H1 (cell line): ENCODE measurements at regions of chr10 and their contacts with region 1.

Region 1: DNA sequence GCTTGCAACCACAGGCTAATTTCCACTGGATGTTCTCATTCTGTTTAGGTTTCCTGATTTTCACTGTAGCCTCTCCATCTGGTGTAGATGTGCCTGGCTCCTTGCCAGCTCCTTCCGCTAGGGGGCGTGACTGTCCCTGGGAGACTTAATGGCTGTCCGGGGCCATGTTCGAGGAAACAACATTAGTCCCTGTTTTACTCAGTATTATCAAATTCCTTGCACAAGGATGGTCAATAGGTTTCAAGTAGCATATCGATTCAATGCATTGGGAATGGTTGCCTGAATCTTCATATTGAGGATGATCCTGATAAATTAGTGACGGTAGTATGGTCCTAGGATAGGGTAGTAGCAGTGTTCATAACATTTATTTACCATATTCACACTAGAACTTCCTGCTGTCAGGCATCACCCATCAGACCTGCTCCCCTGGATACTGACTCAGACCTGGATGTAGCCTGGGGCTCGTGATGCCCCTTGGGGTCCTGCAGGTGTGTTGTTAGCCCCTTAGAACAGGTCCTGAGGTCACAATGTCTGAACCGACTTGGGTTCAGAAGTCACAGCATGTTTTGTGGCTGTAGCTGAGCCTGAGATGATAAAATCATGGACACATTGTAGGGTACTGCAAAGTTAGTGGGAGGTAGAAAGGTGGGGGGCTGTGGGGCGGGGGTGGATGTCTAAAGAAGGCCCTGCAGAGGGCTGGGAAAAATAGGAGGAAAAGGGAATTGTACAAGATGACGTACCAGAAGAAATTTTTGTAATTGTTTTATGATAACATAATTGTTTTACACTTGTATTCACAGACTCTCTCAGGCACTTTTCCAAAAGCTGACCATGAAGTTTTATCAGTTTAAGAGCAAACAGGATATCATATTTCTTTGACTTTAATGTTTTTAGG is 8.9 kb upstream of the EXOC6 start:
- DNase-seq: peak in 1 of 2 experiments; percentile 95
- H3K4me3 ChIP-seq: no peak overlapping the region
- H3K27ac ChIP-seq: no peak overlapping the region
- H3K4me1 ChIP-seq: 0 out of 7 replicates have a peak, but pooled peaks cover 0 to 3% (median 0%) of the 10 kb centered on the region in 4 experiments
- H3K27me3 ChIP-seq: no peaks in the 10 kb centered on the region
- CTCF ChIP-seq: peak; percentile 75 to 95 (median 93)
- EP300 ChIP-seq: no peak
- POLR2A ChIP-seq: no peak
- RAD21 ChIP-seq: peak; percentile 48 to 69

Region 2: GRCh38 chr10:92702301-92702916 is 137.0 kb before region 1 on chr10:
- CTCF ChIA-PET with region 1: no interaction called
- POLR2A ChIA-PET with region 1: no interaction called
- DNase-seq: no peak
- H3K4me3 ChIP-seq: no peak overlapping the region
- H3K27ac ChIP-seq: no peak overlapping the region
- H3K4me1 ChIP-seq: no peaks in the 10 kb centered on the region; a peak in 1 of 7 replicates
- H3K27me3 ChIP-seq: peaks cover 3 to 32% (median 24%) of the 10 kb centered on the region in 4 experiments
- CTCF ChIP-seq: no peak
- EP300 ChIP-seq: no peak
- POLR2A ChIP-seq: no peak
- RAD21 ChIP-seq: no peak

Region 3: GRCh38 chr10:92816091-92816531 is 23.3 kb before region 1 on chr10:
- CTCF ChIA-PET with region 1: interaction called, 22 read pairs
- POLR2A ChIA-PET with region 1: no interaction called
- DNase-seq: no peak
- H3K4me3 ChIP-seq: no peak overlapping the region
- H3K27ac ChIP-seq: no peak overlapping the region
- H3K4me1 ChIP-seq: no peaks in the 10 kb centered on the region
- H3K27me3 ChIP-seq: no peaks in the 10 kb centered on the region
- CTCF ChIP-seq: no peak
- EP300 ChIP-seq: no peak
- POLR2A ChIP-seq: no peak
- RAD21 ChIP-seq: no peak

Region 4: DNA sequence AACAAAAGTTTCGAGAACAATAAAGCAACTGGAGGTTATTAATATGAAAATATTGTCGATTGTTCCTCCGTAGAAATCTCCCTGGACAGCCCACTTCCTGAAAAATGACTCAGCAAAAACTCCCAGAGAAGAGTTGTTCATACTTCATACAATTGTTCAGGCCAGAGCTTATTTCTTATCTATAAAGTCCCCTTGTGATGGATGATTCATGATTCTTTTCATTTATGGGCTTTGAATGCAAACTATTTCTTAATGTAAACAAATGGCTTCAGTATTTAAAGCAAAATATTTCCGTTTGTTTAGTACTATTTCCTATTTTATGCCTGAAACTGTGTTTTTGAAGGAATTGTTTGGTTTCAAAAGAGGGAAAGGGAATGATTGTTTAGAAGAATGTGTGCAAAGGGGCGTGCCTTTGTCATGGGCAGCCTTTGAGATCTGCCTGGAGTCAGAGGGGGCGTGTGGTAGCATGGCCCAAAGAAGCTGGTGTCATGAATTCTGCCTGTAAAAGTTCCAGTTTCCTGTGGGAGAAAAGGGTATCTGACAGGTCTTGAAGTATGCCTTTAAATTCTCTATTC is 17.3 kb before region 1 on chr10:
- CTCF ChIA-PET with region 1: interaction called, 25 read pairs
- POLR2A ChIA-PET with region 1: no interaction called
- DNase-seq: peak in 1 of 2 experiments; percentile 7
- H3K4me3 ChIP-seq: no peak overlapping the region
- H3K27ac ChIP-seq: no peak overlapping the region
- H3K4me1 ChIP-seq: no peaks in the 10 kb centered on the region
- H3K27me3 ChIP-seq: no peaks in the 10 kb centered on the region
- CTCF ChIP-seq: no peak
- EP300 ChIP-seq: no peak
- POLR2A ChIP-seq: no peak
- RAD21 ChIP-seq: no peak

Region 5: GRCh38 chr10:92829042-92829785 is 10.2 kb before region 1 on chr10:
- CTCF ChIA-PET with region 1: interaction called, 86 read pairs
- POLR2A ChIA-PET with region 1: interaction called, 3 read pairs
- DNase-seq: peak in 1 of 2 experiments; percentile 42
- H3K4me3 ChIP-seq: no peak overlapping the region
- H3K27ac ChIP-seq: no peak overlapping the region
- H3K4me1 ChIP-seq: no peaks in the 10 kb centered on the region
- H3K27me3 ChIP-seq: no peaks in the 10 kb centered on the region
- CTCF ChIP-seq: no peak
- EP300 ChIP-seq: no peak
- POLR2A ChIP-seq: no peak
- RAD21 ChIP-seq: no peak

Region 6: DNA sequence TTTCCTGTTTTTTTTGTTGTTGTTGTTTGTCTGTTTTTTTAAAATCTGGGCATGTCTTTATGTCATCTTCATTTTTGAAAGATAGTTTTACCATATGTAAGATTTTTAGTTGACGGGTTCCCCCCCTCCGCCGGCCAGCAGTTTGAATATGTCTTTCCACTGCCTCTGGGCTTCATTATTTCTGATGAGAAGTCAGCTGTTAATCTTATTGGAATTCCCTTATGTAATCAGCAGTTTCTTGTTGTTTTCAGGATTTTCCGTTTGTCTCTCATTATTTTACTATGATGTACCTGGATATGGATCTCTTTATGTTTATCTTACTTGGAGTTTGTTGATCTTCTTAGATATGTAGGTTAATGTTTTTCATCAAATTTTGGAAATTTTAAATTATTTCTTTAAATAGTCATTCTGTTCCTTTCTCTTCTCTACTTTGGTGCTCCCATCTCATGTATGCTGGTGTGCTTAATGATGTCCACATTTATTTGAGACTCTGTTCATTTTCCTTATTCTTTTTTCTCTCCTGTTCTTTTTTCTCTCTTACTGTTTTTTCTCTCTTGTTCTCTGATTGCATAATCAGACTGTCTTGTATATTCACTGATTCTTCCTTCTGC is 18.6 kb after region 1 on chr10:
- CTCF ChIA-PET with region 1: interaction called, 20 read pairs
- POLR2A ChIA-PET with region 1: no interaction called
- DNase-seq: no peak
- H3K4me3 ChIP-seq: no peak overlapping the region
- H3K27ac ChIP-seq: no peak overlapping the region
- H3K4me1 ChIP-seq: no peaks in the 10 kb centered on the region
- H3K27me3 ChIP-seq: no peaks in the 10 kb centered on the region
- CTCF ChIP-seq: no peak
- EP300 ChIP-seq: no peak
- POLR2A ChIP-seq: no peak
- RAD21 ChIP-seq: no peak

Region 7: GRCh38 chr10:92880233-92880861 is 40.9 kb after region 1 on chr10:
- CTCF ChIA-PET with region 1: interaction called, 23 read pairs
- POLR2A ChIA-PET with region 1: no interaction called
- DNase-seq: no peak
- H3K4me3 ChIP-seq: no peak overlapping the region
- H3K27ac ChIP-seq: no peak overlapping the region
- H3K4me1 ChIP-seq: no peaks in the 10 kb centered on the region
- H3K27me3 ChIP-seq: no peaks in the 10 kb centered on the region
- CTCF ChIP-seq: peak in 2 of 3 experiments; percentile 32 to 45; a peak in 2 of 4 replicates
- EP300 ChIP-seq: no peak
- POLR2A ChIP-seq: no peak
- RAD21 ChIP-seq: peak; percentile 73 to 76